BJ (cell line): ENCODE measurements at regions of chr1 and their contacts with region 1.

Region 1: DNA sequence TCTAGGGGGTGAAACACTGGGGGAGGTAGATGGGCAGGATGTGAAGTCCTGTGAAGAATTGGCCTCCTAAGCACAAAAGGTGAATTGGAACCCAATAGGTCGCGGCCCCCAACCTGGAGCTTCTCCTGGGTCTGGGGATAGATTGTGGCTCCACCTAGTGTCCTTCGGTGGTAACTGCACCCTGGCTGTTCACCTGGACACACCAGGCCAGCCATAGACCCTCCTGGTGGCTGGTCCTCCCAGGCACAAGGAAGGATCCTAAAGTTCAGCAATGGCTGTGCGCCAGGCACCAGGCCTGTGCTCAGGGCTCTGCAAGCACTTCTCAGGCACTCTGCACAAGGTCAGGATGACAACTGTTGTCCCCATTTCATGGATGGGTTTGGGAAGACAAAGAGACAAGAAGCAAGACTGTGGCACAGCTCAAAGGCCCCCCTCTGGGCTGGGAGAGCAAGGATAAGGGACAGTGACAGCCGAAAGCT is 13.5 kb downstream of the ESPN start:
- DNase-seq: no peak
- H3K4me3 ChIP-seq: no peak overlapping the region
- H3K27me3 ChIP-seq: peaks cover 14% of the 10 kb centered on the region
- CTCF ChIP-seq: peak; percentile 91

Region 2: GRCh38 chr1:6343506-6344405 is 94.3 kb before region 1 on chr1:
- CTCF ChIA-PET with region 1: interaction called, 12 read pairs
- POLR2A ChIA-PET with region 1: no interaction called
- DNase-seq: no peak
- H3K4me3 ChIP-seq: no peak overlapping the region
- H3K27me3 ChIP-seq: no peaks in the 10 kb centered on the region
- CTCF ChIP-seq: peak; percentile 96

Region 3: DNA sequence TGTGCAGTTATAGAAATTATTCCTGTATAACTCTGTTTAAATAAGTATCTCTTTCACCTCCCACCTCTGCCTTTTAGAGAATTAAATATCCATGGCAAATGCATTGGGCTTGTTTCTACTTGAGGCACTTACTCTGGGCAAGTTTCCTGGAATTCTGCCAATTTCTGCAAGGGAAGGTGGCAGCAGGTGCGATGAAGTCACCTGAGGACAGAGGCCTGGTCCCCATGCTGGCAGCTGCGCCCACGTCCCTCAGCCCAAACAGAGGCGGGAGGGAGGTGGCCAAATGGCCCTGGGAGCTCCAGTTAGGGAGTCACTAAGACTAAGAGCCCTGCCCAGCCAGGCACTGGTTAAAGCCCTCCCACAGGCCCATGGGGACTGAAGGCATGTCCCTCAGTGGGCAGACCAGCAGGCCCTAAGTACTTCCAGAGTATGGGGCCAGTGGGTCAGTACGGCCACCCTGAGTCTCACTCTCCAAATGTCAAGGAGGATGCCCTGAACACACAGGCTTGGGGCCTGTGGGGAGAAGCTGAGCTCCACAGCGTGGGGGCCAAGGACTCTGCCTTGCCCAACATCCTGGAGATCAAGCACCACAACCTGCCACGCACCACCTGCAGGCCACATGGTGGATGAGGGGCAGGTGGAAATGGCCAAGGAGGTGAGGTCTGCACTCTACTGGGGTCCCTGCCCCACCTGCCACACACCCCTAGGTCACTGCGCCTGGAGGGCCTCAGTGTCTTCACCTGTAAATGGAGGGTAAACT is 63.9 kb before region 1 on chr1:
- CTCF ChIA-PET with region 1: no interaction called
- POLR2A ChIA-PET with region 1: no interaction called
- DNase-seq: no peak
- H3K4me3 ChIP-seq: no peak overlapping the region
- H3K27me3 ChIP-seq: no peaks in the 10 kb centered on the region
- CTCF ChIP-seq: no peak

Region 4: GRCh38 chr1:6401673-6402072 is 36.4 kb before region 1 on chr1:
- CTCF ChIA-PET with region 1: interaction called, 10 read pairs
- POLR2A ChIA-PET with region 1: no interaction called
- DNase-seq: no peak
- H3K4me3 ChIP-seq: no peak overlapping the region
- H3K27me3 ChIP-seq: peaks cover 2% of the 10 kb centered on the region; the same call in 1 of the 2 replicates
- CTCF ChIP-seq: no peak

Region 5: GRCh38 chr1:6423321-6423999 is 14.6 kb before region 1 on chr1:
- CTCF ChIA-PET with region 1: interaction called, 25 read pairs
- POLR2A ChIA-PET with region 1: no interaction called
- DNase-seq: no peak
- H3K4me3 ChIP-seq: no peak overlapping the region
- H3K27me3 ChIP-seq: peaks cover 53% of the 10 kb centered on the region
- CTCF ChIP-seq: peak; percentile 63

Region 6: DNA sequence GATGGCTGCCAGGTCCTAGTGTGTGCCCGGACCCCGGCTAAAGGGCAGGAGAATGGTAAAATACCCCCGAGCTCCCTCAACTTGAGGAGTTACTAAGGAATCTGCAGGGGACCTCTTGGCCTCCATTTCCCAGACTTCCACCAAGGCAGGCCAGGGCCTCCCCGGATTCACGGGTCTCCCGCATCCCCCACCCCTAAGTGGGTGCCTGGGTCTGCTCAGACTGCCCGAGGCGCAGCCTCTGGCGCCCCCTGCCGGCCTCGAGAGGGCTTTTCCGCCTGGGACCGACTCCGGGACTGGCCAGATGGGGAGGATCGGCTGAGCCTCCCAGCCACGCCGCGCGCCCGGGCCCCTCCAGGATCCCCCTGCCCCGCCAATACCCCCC is 51.7 kb after region 1 on chr1:
- CTCF ChIA-PET with region 1: interaction called, 20 read pairs
- POLR2A ChIA-PET with region 1: no interaction called
- DNase-seq: no peak
- H3K4me3 ChIP-seq: peak overlapping the region; percentile 58
- H3K27me3 ChIP-seq: no peaks in the 10 kb centered on the region
- CTCF ChIP-seq: peak; percentile 97